Activated CD8-positive, alpha-beta T cell treated with anti-CD3 and anti-CD28 coated beads, Interleukin-2, amount 10 ng/mL, durations not matched to agents 7 days and 5 days (primary cell): ENCODE measurements at regions of chr17 and their contacts with region 1.

Region 1: GRCh38 chr17:60720763-60721531 is 43.3 kb downstream of the BCAS3 start:
- DNase-seq: peak; percentile 60
- ATAC-seq: peak; percentile 51
- H3K4me3 Mint-ChIP-seq: no peak overlapping the region
- H3K27ac Mint-ChIP-seq: no peak overlapping the region
- H3K4me1 Mint-ChIP-seq: peaks cover 2% of the 10 kb centered on the region
- H3K27me3 Mint-ChIP-seq: no peaks in the 10 kb centered on the region

Region 2: DNA sequence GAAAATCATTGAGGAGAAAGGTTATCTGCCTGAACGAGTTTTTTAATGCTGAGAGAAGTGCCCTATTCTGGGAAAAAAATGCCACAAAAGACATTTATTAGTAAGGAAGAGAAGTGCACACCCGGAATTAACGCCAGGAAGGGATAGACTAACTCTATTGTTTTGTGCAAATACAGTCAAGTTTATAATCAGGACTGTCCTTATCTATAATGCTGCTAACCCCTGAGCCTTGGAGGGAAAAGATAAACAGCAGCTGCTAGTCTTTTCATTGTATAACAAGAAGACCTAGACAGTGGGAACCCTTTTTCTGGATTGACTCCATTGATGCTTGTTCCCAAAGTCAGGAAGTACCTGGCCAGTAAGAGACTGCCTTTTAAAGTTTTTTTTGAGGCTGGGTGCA is 16.8 kb before region 1 on chr17:
- CTCF ChIA-PET with region 1: interaction called, 16 read pairs
- POLR2A ChIA-PET with region 1: no interaction called
- DNase-seq: no peak
- ATAC-seq: no peak
- H3K4me3 Mint-ChIP-seq: no peak overlapping the region
- H3K27ac Mint-ChIP-seq: no peak overlapping the region
- H3K4me1 Mint-ChIP-seq: no peaks in the 10 kb centered on the region
- H3K27me3 Mint-ChIP-seq: no peaks in the 10 kb centered on the region

Region 3: GRCh38 chr17:60741031-60741430 is 20.1 kb after region 1 on chr17:
- CTCF ChIA-PET with region 1: interaction called, 10 read pairs
- POLR2A ChIA-PET with region 1: no interaction called
- DNase-seq: no peak
- ATAC-seq: no peak
- H3K4me3 Mint-ChIP-seq: no peak overlapping the region
- H3K27ac Mint-ChIP-seq: no peak overlapping the region
- H3K4me1 Mint-ChIP-seq: no peaks in the 10 kb centered on the region
- H3K27me3 Mint-ChIP-seq: no peaks in the 10 kb centered on the region